ENCODE measurements at regions of chr7 and their contacts with region 1.

Region 1: GRCh38 chr7:25968205-25968993 is 183.6 kb upstream of the NFE2L3 start:
- DNase-seq: no peak
- H3K4me3 ChIP-seq: no peak overlapping the region
- H3K27ac ChIP-seq: no peak overlapping the region
- H3K4me1 ChIP-seq: no peaks in the 10 kb centered on the region
- H3K27me3 ChIP-seq: peaks cover 1% of the 10 kb centered on the region
- CTCF ChIP-seq: no peak

Region 2: GRCh38 chr7:26011039-26011696 is 42.8 kb after region 1 on chr7:
- CTCF ChIA-PET with region 1: no interaction called
- dilution Hi-C with region 1: loop called (anchors 10 kb)
- in situ Hi-C with region 1: no loop called
- intact Hi-C with region 1: no loop called
- DNase-seq: no peak
- H3K4me3 ChIP-seq: no peak overlapping the region
- H3K27ac ChIP-seq: no peak overlapping the region
- H3K4me1 ChIP-seq: no peaks in the 10 kb centered on the region
- H3K27me3 ChIP-seq: no peaks in the 10 kb centered on the region
- CTCF ChIP-seq: no peak